ENCODE measurements at regions of chr4 and their contacts with region 1.

Region 1: DNA sequence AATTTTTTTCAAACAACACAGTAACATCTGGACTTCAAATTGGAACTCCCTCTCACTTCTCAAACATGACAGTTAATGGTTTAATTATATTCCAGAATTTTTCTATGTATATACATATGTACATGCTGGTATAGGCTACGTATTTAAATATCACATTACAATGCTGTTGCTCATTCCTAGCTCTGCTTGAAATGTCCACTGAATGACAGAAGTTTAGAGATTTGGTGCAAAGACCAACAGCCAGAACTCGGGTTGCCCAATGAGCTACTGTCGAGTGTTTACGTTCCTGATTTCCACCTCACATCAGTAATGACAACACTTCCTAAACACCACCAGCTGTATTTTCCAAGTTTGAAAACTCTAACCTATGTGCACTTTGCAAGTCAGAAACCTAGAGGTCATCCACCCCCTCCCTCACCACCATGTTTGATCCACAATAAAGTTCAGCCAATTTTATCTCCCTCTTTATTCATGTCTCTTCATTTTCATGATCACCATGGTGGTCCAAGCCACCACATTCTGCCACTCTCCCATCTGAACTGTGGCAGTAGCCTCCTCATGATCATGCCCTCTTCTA is 49.3 kb upstream of the RPL34 start:
- DNase-seq: no peak
- ATAC-seq: no peak
- H3K4me3 ChIP-seq: no peak overlapping the region
- H3K4me1 ChIP-seq: peaks cover 2% of the 10 kb centered on the region
- CTCF ChIP-seq: no peak

Region 2: GRCh38 chr4:108029731-108030130 is 541.4 kb before region 1 on chr4:
- intact Hi-C with region 1: loop called in 1 of 2 experiments (anchors 10 kb)
- DNase-seq: no peak
- ATAC-seq: peak; percentile 29
- H3K4me3 ChIP-seq: no peak overlapping the region
- H3K4me1 ChIP-seq: no peaks in the 10 kb centered on the region
- CTCF ChIP-seq: no peak

Region 3: GRCh38 chr4:108193886-108194672 is 377.0 kb before region 1 on chr4:
- intact Hi-C with region 1: loop called in 1 of 2 experiments (anchors 5 kb)
- DNase-seq: no peak
- ATAC-seq: peak; percentile 31
- H3K4me3 ChIP-seq: no peak overlapping the region
- H3K4me1 ChIP-seq: no peaks in the 10 kb centered on the region
- CTCF ChIP-seq: no peak

Region 4: GRCh38 chr4:108700081-108700757 is 129.1 kb after region 1 on chr4:
- intact Hi-C with region 1: no loop called
- DNase-seq: no peak
- ATAC-seq: no peak
- H3K4me3 ChIP-seq: no peak overlapping the region
- H3K4me1 ChIP-seq: no peaks in the 10 kb centered on the region
- CTCF ChIP-seq: no peak

Region 5: GRCh38 chr4:108762559-108763225 is 191.6 kb after region 1 on chr4 and contains the start of gene ETNPPL:
- intact Hi-C with region 1: no loop called
- DNase-seq: peak in 2 of 3 donors; percentile 2 to 26
- ATAC-seq: peak; percentile 61
- H3K4me3 ChIP-seq: no peak within 1 kb of the TSS
- H3K4me1 ChIP-seq: peaks cover 9% of the 10 kb centered on the region
- CTCF ChIP-seq: no peak
- total RNA-seq, gene ETNPPL: not detected

Region 6: GRCh38 chr4:108940149-108940548 is 369.1 kb after region 1 on chr4:
- intact Hi-C with region 1: no loop called
- DNase-seq: no peak
- ATAC-seq: no peak
- H3K4me3 ChIP-seq: no peak overlapping the region
- H3K4me1 ChIP-seq: no peaks in the 10 kb centered on the region
- CTCF ChIP-seq: no peak